K562 (cell line): ENCODE measurements at regions of chr5 and their contacts with region 1.

Region 1: GRCh38 chr5:96702503-96703383 is 40.6 kb downstream of the CAST start:
- DNase-seq: peak; percentile 91 to 96 (median 94)
- ATAC-seq: peak; percentile 88
- H3K4me3 ChIP-seq: peak overlapping the region; percentile 72
- H3K27ac ChIP-seq: peak overlapping the region; percentile 90
- H3K4me1 ChIP-seq: peaks cover 18 to 35% of the 10 kb centered on the region in 2 experiments
- H3K27me3 ChIP-seq: no peaks in the 10 kb centered on the region
- CTCF ChIP-seq: no peak
- EP300 ChIP-seq: no peak
- POLR2A ChIP-seq: peak; percentile 83
- RAD21 ChIP-seq: no peak

Region 2: GRCh38 chr5:96714951-96715451 is 12.3 kb after region 1 on chr5:
- CTCF ChIA-PET with region 1: no interaction called
- POLR2A ChIA-PET with region 1: interaction called, 28 read pairs
- in situ Hi-C with region 1: no loop called
- intact Hi-C with region 1: no loop called
- DNase-seq: peak in 3 of 4 experiments; percentile 28 to 54 (median 33)
- ATAC-seq: peak; percentile 77
- H3K4me3 ChIP-seq: no peak overlapping the region
- H3K27ac ChIP-seq: peak overlapping the region; percentile 37; the same call in 2 of the 3 replicates
- H3K4me1 ChIP-seq: peaks cover 0 to 35% of the 10 kb centered on the region in 2 experiments; a peak in 4 of 5 replicates
- H3K27me3 ChIP-seq: no peaks in the 10 kb centered on the region
- CTCF ChIP-seq: no peak
- EP300 ChIP-seq: peak; percentile 63
- POLR2A ChIP-seq: no peak
- RAD21 ChIP-seq: no peak

Region 3: GRCh38 chr5:96758621-96759020 is 55.9 kb after region 1 on chr5:
- CTCF ChIA-PET with region 1: no interaction called
- POLR2A ChIA-PET with region 1: no interaction called
- in situ Hi-C with region 1: no loop called
- intact Hi-C with region 1: no loop called
- DNase-seq: no peak
- ATAC-seq: no peak
- H3K4me3 ChIP-seq: no peak overlapping the region
- H3K27ac ChIP-seq: no peak overlapping the region
- H3K4me1 ChIP-seq: no peaks in the 10 kb centered on the region
- H3K27me3 ChIP-seq: no peaks in the 10 kb centered on the region
- CTCF ChIP-seq: no peak
- EP300 ChIP-seq: no peak
- POLR2A ChIP-seq: no peak
- RAD21 ChIP-seq: no peak